Activated CD4-positive, alpha-beta T cell treated with anti-CD3 and anti-CD28 coated beads for 36 hours (primary cell): ENCODE measurements at regions of chr4 and their contacts with region 1.

Region 1: GRCh38 chr4:8158710-8159536 is at the start of gene ABLIM2:
- DNase-seq: peak; percentile 99
- ATAC-seq: peak; percentile 99
- H3K4me3 Mint-ChIP-seq: peak within 1 kb of the TSS; percentile 95
- H3K27ac Mint-ChIP-seq: peak within 1 kb of the TSS; percentile 78
- H3K4me1 Mint-ChIP-seq: peaks cover 14% of the 10 kb centered on the region
- H3K27me3 Mint-ChIP-seq: peaks cover 7% of the 10 kb centered on the region
- total RNA-seq, gene ABLIM2: 0.58 to 0.64 TPM

Region 2: GRCh38 chr4:6986781-6987587 is 1171.9 kb before region 1 on chr4:
- CTCF ChIA-PET with region 1: no interaction called
- POLR2A ChIA-PET with region 1: no interaction called
- intact Hi-C with region 1: loop called in 1 of 2 experiments (anchors 2 kb)
- DNase-seq: peak; percentile 97
- ATAC-seq: peak; percentile 93
- H3K4me3 Mint-ChIP-seq: peak overlapping the region; percentile 96
- H3K27ac Mint-ChIP-seq: peak overlapping the region; percentile 93
- H3K4me1 Mint-ChIP-seq: peaks cover 66% of the 10 kb centered on the region
- H3K27me3 Mint-ChIP-seq: no peaks in the 10 kb centered on the region

Region 3: GRCh38 chr4:7857238-7857701 is 301.7 kb before region 1 on chr4:
- CTCF ChIA-PET with region 1: interaction called, 3 read pairs
- POLR2A ChIA-PET with region 1: no interaction called
- intact Hi-C with region 1: loop called in 1 of 2 experiments (anchors 5 kb)
- DNase-seq: no peak
- ATAC-seq: peak; percentile 69
- H3K4me3 Mint-ChIP-seq: peak overlapping the region; percentile 15
- H3K27ac Mint-ChIP-seq: peak overlapping the region; percentile 93
- H3K4me1 Mint-ChIP-seq: peaks cover 69% of the 10 kb centered on the region
- H3K27me3 Mint-ChIP-seq: no peaks in the 10 kb centered on the region

Region 4: DNA sequence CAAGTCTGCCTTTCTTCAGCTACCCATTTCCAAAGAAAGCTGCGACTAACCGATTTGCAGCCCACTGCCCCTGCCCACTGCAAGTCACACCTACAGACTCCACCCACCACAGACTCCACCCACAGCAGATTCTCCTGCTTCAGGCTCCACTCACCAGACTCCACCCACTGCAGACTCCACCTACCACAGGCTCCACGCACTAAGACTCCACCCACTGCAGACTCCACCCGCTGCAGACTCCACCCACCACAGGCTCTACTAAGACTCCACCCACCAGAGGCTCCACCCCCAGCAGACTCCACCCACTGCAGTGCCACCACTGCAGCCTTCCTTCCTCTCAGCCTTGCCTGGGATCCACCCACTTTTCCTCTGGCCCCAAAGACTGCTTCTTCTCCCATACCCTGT is 41.6 kb before region 1 on chr4:
- CTCF ChIA-PET with region 1: no interaction called
- POLR2A ChIA-PET with region 1: no interaction called
- intact Hi-C with region 1: loop called in 1 of 2 experiments (anchors 1 kb)
- DNase-seq: peak; percentile 74
- ATAC-seq: peak; percentile 98
- H3K4me3 Mint-ChIP-seq: no peak overlapping the region
- H3K27ac Mint-ChIP-seq: no peak overlapping the region
- H3K4me1 Mint-ChIP-seq: no peaks in the 10 kb centered on the region
- H3K27me3 Mint-ChIP-seq: no peaks in the 10 kb centered on the region

Region 5: GRCh38 chr4:8228319-8229250 is 69.7 kb after region 1 on chr4:
- CTCF ChIA-PET with region 1: no interaction called
- POLR2A ChIA-PET with region 1: no interaction called
- intact Hi-C with region 1: loop called in 1 of 2 experiments (anchors 2 kb)
- DNase-seq: peak; percentile 92
- ATAC-seq: peak; percentile 90
- H3K4me3 Mint-ChIP-seq: peak overlapping the region; percentile 7
- H3K27ac Mint-ChIP-seq: peak overlapping the region; percentile 48
- H3K4me1 Mint-ChIP-seq: peaks cover 31% of the 10 kb centered on the region
- H3K27me3 Mint-ChIP-seq: no peaks in the 10 kb centered on the region

Region 6: DNA sequence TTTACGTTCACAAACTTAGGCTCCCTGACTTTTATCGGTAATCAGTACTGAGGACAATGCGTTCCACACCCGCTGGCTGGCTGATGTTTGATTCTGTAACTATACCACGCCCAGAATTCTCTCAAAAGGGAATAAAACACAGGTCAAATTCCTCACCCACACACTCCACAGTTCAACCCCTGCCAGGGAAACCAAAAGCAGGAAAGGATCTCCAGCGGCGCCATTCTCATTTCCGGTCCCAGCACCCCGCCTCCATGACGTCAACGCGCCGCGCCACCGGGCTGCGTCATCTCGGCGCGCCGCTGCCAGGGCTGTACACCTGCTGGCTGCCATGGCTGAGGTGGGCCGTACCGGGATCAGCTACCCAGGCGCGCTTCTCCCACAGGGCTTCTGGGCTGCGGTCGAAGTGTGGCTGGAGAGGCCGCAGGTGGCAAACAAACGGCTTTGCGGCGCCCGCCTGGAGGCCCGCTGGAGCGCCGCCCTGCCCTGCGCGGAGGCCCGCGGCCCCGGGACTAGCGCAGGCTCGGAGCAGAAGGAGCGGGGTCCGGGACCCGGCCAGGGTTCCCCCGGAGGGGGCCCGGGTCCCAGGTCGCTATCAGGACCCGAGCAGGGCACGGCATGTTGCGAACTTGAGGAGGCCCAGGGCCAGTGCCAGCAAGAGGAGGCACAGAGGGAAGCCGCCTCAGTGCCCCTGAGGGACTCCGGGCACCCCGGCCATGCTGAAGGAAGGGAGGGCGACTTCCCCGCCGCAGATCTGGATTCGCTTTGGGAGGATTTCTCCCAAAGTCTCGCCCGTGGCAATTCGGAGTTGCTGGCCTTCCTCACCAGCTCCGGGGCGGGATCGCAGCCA is 281.8 kb after region 1 on chr4 and contains the starts of genes ACOX3 and TRMT44:
- CTCF ChIA-PET with region 1: no interaction called
- POLR2A ChIA-PET with region 1: no interaction called
- intact Hi-C with region 1: loop called in 1 of 2 experiments (anchors 1 kb)
- DNase-seq: peak; percentile 95
- ATAC-seq: peak; percentile 89
- H3K4me3 Mint-ChIP-seq: peak within 1 kb of the TSS; percentile 93
- H3K27ac Mint-ChIP-seq: peak within 1 kb of the TSS; percentile 99
- H3K4me1 Mint-ChIP-seq: peaks cover 75% of the 10 kb centered on the region
- H3K27me3 Mint-ChIP-seq: no peaks in the 10 kb centered on the region
- total RNA-seq, gene ACOX3: 20.5 to 29.3 TPM
- total RNA-seq, gene TRMT44: 20.1 to 24.5 TPM

Region 7: DNA sequence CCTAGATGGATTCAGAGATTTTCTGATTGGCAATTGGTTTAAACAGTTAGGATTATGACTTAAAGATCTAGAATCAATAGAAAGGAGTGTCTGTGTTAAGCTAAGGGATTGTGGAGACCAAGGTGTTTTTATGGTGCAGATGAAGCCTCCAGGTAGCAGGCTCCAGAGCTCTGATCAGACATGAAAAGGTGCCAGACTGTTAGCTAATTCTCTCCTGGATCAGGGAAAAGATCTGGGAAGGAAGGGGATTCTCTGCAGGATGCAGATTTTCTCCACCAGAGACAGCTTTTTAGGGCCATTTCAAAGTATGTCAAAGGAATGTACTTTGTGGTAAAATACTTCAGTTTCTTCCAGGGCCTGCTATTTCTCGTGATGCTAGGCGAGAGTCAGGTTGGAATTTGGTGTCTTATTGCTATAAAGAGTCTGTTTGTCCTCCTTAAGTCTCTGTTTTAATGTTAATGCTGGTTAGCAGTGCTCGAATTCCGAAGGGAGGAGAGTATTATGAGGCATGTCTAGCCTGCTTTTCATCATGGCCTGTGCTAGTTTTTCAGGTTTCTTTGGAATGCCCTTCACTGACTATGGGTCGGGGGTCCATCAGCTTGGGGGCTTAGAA is 409.3 kb after region 1 on chr4:
- CTCF ChIA-PET with region 1: no interaction called
- POLR2A ChIA-PET with region 1: no interaction called
- intact Hi-C with region 1: no loop called
- DNase-seq: no peak
- ATAC-seq: no peak
- H3K4me3 Mint-ChIP-seq: no peak overlapping the region
- H3K27ac Mint-ChIP-seq: no peak overlapping the region
- H3K4me1 Mint-ChIP-seq: no peaks in the 10 kb centered on the region
- H3K27me3 Mint-ChIP-seq: peaks cover 2% of the 10 kb centered on the region